Activated CD4-positive, alpha-beta T cell treated with anti-CD3 and anti-CD28 coated beads for 36 hours (primary cell): ENCODE measurements at regions of chr12 and their contacts with region 1.

Region 1: GRCh38 chr12:9244894-9245293 is 36.7 kb upstream of the PZP start:
- DNase-seq: peak; percentile 88
- ATAC-seq: peak; percentile 89
- H3K4me3 Mint-ChIP-seq: peak overlapping the region; percentile 46
- H3K27ac Mint-ChIP-seq: peak overlapping the region; percentile 89
- H3K4me1 Mint-ChIP-seq: peaks cover 50% of the 10 kb centered on the region
- H3K27me3 Mint-ChIP-seq: peaks cover 10% of the 10 kb centered on the region

Region 2: GRCh38 chr12:8644345-8645248 is 600.3 kb before region 1 on chr12:
- CTCF ChIA-PET with region 1: no interaction called
- POLR2A ChIA-PET with region 1: no interaction called
- intact Hi-C with region 1: loop called (anchors 1 to 10 kb)
- DNase-seq: peak; percentile 80
- ATAC-seq: peak; percentile 89
- H3K4me3 Mint-ChIP-seq: peak overlapping the region; percentile 1
- H3K27ac Mint-ChIP-seq: peak overlapping the region; percentile 80
- H3K4me1 Mint-ChIP-seq: peaks cover 45% of the 10 kb centered on the region
- H3K27me3 Mint-ChIP-seq: peaks cover 6% of the 10 kb centered on the region

Region 3: GRCh38 chr12:8662593-8662992 is 582.3 kb before region 1 on chr12 and contains the start of gene MFAP5:
- CTCF ChIA-PET with region 1: no interaction called
- POLR2A ChIA-PET with region 1: no interaction called
- intact Hi-C with region 1: no loop called
- DNase-seq: no peak
- ATAC-seq: no peak
- H3K4me3 Mint-ChIP-seq: no peak within 1 kb of the TSS
- H3K27ac Mint-ChIP-seq: no peak within 1 kb of the TSS
- H3K4me1 Mint-ChIP-seq: no peaks in the 10 kb centered on the region
- H3K27me3 Mint-ChIP-seq: peaks cover 4% of the 10 kb centered on the region
- total RNA-seq, gene MFAP5: not detected

Region 4: GRCh38 chr12:9027161-9028059 is 217.5 kb before region 1 on chr12:
- CTCF ChIA-PET with region 1: no interaction called
- POLR2A ChIA-PET with region 1: no interaction called
- intact Hi-C with region 1: loop called in 1 of 2 experiments (anchors 1 kb)
- DNase-seq: peak; percentile 63
- ATAC-seq: no peak
- H3K4me3 Mint-ChIP-seq: peak overlapping the region; percentile 36
- H3K27ac Mint-ChIP-seq: peak overlapping the region; percentile 79
- H3K4me1 Mint-ChIP-seq: peaks cover 52% of the 10 kb centered on the region
- H3K27me3 Mint-ChIP-seq: no peaks in the 10 kb centered on the region

Region 5: DNA sequence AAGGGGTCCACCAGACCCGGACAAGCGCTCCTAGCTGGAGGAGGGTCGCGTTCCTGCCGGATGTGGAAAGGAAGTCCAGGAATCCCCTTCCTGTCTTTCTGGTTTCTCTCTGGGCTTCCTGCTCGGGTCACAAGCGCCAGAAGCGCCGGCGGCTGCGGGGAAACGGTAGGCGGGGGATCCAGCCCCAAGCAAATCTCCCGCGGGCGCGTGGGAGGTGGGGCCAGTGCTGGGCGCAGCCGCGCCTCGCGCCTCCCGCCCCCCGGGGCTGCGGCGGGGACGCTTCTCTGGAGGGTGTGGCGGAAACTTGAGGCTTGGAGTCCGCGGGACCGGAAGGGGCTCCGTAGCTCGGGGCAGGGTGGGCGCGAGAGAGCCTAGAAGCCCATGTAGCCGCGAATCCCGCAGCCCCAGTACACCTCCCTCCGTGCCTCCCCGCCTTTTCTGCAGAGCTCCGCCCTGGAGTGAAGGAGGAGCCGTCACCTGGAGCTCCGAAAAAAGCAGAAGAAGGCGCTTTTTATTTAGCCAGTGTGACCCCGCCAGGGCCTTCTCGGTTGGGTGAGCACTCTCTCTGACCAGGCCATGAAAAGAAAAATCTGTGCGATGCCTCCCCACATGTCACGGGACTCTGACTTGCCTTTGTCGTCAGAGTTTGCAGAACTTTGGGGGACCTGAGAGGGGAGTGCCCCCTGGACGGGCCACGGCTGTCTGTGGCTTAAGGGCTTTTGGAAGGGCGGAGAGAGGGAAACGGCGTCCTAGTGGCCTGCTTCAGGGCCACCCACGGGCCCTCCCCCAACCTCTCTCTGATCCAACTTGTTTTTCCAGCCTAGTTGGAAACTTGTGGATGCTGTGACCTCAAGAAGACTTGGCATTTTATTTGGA is 403.2 kb after region 1 on chr12:
- CTCF ChIA-PET with region 1: no interaction called
- POLR2A ChIA-PET with region 1: no interaction called
- intact Hi-C with region 1: loop called in 1 of 2 experiments (anchors 1 kb)
- DNase-seq: peak; percentile 96
- ATAC-seq: peak; percentile 72
- H3K4me3 Mint-ChIP-seq: peak overlapping the region; percentile 100
- H3K27ac Mint-ChIP-seq: peak overlapping the region; percentile 100
- H3K4me1 Mint-ChIP-seq: peaks cover 58% of the 10 kb centered on the region
- H3K27me3 Mint-ChIP-seq: no peaks in the 10 kb centered on the region

Region 6: GRCh38 chr12:9869307-9870161 is 624.6 kb after region 1 on chr12 and contains the start of gene CLEC2B:
- CTCF ChIA-PET with region 1: no interaction called
- POLR2A ChIA-PET with region 1: no interaction called
- intact Hi-C with region 1: loop called in 1 of 2 experiments (anchors 10 kb)
- DNase-seq: peak; percentile 59
- ATAC-seq: peak; percentile 69
- H3K4me3 Mint-ChIP-seq: peak within 1 kb of the TSS; percentile 77
- H3K27ac Mint-ChIP-seq: peak within 1 kb of the TSS; percentile 95
- H3K4me1 Mint-ChIP-seq: peaks cover 23% of the 10 kb centered on the region
- H3K27me3 Mint-ChIP-seq: no peaks in the 10 kb centered on the region
- total RNA-seq, gene CLEC2B: 21.8 to 25.8 TPM